ENCODE measurements at regions of chr19 and their contacts with region 1.

Region 1: DNA sequence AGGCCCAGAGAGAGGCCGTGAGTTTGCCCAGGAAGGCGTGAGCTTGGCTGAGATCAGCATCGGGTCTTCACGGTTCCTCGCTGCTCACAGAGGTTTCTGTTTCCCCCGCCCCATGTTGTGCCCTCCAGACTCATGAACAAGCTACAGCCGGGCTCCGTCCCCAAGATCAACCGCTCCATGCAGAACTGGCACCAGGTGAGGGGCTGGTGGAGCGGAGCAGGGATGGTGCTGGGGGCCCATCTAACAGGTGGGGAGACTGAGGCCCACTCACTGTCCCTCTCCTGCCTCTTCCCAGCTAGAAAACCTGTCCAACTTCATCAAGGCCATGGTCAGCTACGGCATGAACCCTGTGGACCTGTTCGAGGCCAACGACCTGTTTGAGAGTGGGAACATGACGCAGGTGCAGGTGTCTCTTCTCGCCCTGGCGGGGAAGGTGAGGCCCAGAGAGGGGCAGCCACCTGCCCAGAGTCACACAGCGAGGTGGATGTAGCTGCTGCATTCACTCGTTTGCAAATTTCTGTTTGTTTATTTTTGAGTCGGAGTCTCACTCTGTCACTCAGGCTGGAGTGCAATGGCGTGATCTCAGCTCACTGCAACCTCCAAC is 6.0 kb downstream of the CNN2 start:
- DNase-seq: no peak
- H3K4me3 Mint-ChIP-seq: no peak overlapping the region
- H3K27ac Mint-ChIP-seq: peak overlapping the region; percentile 25
- H3K4me1 Mint-ChIP-seq: peaks cover 52% of the 10 kb centered on the region
- H3K27me3 Mint-ChIP-seq: no peaks in the 10 kb centered on the region

Region 2: GRCh38 chr19:1009976-1010538 is 22.3 kb before region 1 on chr19:
- CTCF ChIA-PET with region 1: no interaction called
- POLR2A ChIA-PET with region 1: no interaction called
- DNase-seq: no peak
- H3K4me3 Mint-ChIP-seq: no peak overlapping the region
- H3K27ac Mint-ChIP-seq: no peak overlapping the region
- H3K4me1 Mint-ChIP-seq: no peaks in the 10 kb centered on the region
- H3K27me3 Mint-ChIP-seq: no peaks in the 10 kb centered on the region

Region 3: DNA sequence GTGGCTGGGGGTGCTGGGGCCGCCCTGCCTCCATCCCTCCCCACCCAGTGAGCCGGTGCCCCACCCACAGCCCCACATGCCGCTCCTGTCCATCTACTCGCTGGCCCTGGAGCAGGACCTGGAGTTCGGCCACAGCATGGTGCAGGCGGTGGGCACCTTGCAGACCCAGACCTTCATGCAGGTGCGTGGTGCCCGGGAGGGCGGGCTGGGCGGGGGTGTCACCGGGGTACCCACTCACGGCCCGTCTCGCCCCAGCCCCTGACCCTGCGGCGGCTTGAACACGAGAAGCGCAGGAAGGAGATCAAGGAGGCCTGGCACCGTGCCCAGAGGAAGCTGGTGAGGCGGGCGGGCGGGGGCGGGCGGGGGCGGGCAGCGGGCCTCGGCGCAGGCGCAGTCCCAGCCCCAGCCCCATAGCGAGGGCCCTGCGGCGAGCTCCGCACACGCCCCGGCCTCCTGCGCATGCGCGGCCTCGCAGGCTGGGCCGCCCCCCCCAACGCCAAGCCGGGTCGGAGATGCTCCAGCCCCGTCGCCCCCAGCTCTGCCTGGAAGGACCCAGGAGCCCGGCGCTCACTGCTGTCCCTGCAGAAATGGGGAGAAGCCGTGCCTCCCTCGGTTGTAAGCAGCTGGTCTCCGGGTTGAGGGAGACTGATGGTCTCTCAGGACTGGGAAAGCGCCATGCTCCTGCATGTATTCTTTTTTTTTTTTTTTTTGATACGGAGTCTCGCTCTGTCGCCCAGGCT is 42.3 kb after region 1 on chr19:
- CTCF ChIA-PET with region 1: interaction called, 6 read pairs
- POLR2A ChIA-PET with region 1: interaction called, 10 read pairs
- DNase-seq: peak; percentile 95
- H3K4me3 Mint-ChIP-seq: peak overlapping the region; percentile 88
- H3K27ac Mint-ChIP-seq: peak overlapping the region; percentile 98
- H3K4me1 Mint-ChIP-seq: peaks cover 48% of the 10 kb centered on the region
- H3K27me3 Mint-ChIP-seq: no peaks in the 10 kb centered on the region